Cardiac septum (tissue), 1 donor: ENCODE measurements at regions of chr1 and their contacts with region 1.

Region 1: DNA sequence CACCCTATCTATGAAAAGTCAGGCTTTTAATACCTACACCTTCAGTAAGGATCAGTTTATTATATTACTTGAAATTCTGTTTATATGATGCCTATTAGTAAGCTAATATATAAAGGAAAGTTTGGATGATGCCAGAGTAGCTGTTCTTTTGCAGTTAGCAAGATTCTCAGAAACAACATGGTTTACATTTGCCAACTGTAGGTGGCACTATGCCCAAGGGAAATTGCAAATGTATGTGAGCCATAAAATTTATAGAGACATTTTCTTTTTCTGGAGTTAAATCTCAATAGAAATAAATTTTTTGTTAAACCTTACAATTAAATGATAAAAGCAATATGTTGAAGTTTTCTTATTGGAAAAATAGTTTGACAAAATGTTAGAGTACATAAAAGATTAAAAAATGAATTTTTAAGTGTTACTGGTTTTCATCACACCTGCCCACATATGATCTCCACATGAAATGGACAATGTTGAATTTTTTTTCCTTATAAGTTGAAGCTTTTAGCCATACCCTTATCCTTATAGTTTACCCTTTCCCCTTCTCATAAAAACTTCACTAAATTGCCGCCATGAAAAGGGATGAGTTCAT is 32.1 kb upstream of the EPHX4 start:
- DNase-seq: no peak

Region 2: DNA sequence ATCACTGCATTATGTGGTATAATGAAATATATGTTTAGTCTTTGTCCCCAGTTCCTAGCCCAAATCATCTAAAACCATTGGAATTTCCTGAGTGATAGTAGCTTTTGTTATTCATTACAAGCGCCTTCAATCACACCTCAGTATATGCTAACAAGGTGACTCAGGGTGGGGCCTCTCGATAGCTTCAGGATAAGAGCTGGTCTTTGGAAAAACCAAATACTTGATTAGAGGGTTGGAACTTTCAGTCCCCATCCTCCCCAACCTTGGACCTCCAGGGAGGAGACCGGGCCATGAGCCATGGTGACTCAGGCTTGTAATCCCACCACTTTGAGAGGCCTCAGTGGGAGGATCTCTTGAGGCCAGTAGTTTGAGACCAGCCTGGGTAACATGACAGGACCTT is 53.6 kb before region 1 on chr1:
- intact Hi-C with region 1: no loop called
- DNase-seq: no peak

Region 3: DNA sequence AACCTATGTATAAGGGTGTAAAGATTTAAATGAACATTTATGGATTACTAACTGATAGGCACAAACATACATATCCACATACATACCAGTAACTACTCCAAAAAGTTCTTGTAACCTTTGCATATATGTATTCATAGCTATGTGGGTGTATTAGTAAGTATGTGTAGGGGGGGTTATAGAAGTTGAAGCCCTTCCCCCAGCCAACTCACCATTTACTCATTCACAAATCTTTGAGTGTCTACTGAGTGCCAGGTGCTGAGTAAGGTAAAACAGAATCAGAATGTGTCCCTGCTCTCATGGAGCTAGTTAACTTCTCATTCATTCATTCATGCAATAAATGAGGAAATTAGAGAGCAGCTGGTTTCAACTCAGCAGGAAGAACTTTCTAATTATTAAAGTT is 221.3 kb after region 1 on chr1:
- intact Hi-C with region 1: no loop called
- DNase-seq: no peak

Region 4: DNA sequence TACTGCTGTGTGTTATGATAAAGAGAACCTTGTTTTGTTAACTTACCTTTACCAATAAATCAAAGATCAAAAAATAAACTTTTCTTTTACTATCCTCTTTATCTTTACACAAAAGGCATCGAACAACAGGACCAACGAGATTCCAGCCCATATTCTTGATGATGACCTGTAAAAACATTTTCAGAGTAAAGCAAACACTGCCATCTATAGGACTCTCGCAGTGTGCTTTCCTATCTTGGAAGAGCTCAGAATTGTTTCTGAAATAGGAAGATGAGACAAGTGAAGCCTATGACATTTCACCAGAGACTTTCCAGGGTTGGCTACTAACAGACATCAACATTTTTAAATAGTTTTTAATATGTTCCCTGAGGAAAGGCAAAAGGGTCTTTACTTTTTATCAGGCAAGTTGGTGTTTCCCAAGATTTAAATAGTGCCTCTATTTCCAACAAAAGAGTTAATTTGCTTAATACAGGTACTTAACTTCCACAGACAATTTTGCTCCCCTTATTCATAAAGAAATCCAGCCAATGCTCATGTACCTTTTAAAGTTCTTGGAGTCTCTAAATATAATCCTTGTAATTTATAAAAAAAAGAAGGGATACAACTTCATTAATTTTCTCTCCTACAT is 293.8 kb after region 1 on chr1:
- intact Hi-C with region 1: loop called (anchors 2 kb)
- DNase-seq: no peak